PC-9 (cell line): ENCODE measurements at regions of chr6 and their contacts with region 1.

Region 1: DNA sequence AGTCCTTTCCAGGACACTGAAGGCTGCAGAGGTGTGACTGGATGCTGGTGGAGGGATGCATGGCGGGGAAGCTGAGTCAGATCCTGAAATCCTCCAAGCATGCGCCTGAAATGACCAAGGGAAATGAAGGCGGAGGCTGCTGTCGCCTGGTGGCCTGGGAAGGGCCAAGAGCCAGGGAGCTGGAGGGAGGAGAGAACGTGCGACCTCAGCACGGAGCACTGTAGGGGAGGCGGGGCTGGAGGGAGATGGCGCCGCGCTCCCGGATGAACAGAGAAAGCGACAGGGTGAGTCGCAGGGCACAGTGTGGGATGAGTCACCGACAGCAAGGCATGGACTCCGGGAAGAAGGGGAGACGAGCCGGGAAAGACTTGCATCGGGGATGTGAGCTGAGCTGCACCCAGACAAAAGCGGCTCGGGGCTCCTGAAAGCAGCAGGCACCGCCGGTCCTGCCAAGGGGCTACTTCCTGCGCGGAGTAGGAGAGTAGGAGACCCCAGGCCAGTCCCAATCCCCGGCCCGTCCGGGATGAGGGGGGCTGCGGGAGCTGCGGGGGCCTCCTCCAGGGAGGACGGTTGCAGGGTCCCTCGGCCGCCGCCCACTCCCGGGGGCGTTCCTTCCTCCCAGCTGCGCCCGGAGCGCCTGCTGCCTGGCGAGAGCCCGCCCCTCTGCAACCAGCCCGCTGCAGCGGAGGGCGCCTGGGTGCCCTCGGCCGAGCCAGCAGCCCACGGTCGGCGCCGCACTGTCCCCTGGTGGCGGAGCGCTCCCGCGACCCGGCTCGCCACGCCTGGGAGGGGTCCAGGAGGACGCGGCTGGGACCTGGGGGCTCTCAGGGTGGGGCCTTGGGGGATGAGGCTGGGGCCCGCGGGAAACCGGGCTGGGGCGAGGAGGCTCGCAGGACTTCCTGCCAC is 11.0 kb upstream of the NQO2 start:
- DNase-seq: peak; percentile 87 to 91
- H3K4me3 ChIP-seq: peak overlapping the region; percentile 83
- H3K27ac ChIP-seq: peak overlapping the region; percentile 99
- H3K4me1 ChIP-seq: peaks cover 49% of the 10 kb centered on the region
- H3K27me3 ChIP-seq: no peaks in the 10 kb centered on the region
- CTCF ChIP-seq: peak; percentile 74

Region 2: GRCh38 chr6:2738373-2738979 is 250.2 kb before region 1 on chr6:
- CTCF ChIA-PET with region 1: interaction called, 3 read pairs
- POLR2A ChIA-PET with region 1: no interaction called
- intact Hi-C with region 1: loop called (anchors 2 kb)
- DNase-seq: peak; percentile 38 to 53
- H3K4me3 ChIP-seq: no peak overlapping the region
- H3K27ac ChIP-seq: no peak overlapping the region
- H3K4me1 ChIP-seq: no peaks in the 10 kb centered on the region
- H3K27me3 ChIP-seq: no peaks in the 10 kb centered on the region
- CTCF ChIP-seq: peak; percentile 72

Region 3: DNA sequence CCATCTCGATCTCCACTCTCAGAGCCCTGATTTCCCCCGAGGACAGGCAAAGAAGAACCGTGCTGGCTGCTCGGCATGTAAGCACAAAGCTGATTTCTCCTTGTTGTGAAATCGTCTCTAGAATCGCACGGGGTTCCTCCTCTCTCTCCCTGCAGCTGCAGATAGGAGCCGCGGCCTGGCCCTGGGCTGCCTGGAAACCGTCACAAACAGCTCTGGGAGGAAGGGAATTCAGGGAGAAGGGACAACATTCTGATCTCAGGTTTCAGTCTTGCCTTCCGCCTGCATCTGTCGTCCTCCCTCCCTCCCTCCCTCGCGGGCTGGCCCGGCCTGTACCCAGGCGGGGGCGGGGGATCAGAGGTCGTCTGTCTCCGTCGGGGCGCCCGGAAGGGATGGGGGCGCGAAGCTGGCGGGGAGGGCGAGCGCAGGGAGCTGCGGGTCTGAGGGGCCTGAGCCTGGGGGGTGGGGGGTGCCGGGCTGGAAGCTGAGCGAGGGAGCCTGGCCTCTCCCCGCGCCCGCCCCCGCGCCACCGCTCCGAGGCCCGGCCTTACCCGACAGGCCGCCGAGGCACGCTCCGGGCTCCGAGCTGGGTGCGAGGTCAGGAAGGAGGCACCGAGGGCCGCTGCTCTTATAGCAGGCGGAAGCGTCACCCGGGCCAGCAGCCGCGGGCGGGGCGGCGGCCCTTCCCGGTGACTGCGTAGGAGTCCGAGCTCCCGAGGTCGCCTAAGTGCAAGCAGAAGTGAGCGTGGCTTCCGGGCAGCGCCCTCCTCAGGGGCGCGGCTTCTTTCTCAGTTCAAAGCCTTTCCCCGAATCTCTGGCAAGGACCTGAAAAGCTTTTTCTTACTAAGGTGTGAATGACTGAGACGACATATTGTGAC is 147.2 kb before region 1 on chr6 and contains the start of gene SERPINB1:
- CTCF ChIA-PET with region 1: interaction called, 10 read pairs
- POLR2A ChIA-PET with region 1: interaction called, 18 read pairs
- intact Hi-C with region 1: loop called (anchors 1 kb)
- DNase-seq: peak; percentile 87 to 94
- H3K4me3 ChIP-seq: peak within 1 kb of the TSS; percentile 64
- H3K27ac ChIP-seq: peak within 1 kb of the TSS; percentile 97
- H3K4me1 ChIP-seq: peaks cover 55% of the 10 kb centered on the region
- H3K27me3 ChIP-seq: no peaks in the 10 kb centered on the region
- CTCF ChIP-seq: no peak
- total RNA-seq, gene SERPINB1: 82.3 and 93.9 TPM in 2 replicates

Region 4: DNA sequence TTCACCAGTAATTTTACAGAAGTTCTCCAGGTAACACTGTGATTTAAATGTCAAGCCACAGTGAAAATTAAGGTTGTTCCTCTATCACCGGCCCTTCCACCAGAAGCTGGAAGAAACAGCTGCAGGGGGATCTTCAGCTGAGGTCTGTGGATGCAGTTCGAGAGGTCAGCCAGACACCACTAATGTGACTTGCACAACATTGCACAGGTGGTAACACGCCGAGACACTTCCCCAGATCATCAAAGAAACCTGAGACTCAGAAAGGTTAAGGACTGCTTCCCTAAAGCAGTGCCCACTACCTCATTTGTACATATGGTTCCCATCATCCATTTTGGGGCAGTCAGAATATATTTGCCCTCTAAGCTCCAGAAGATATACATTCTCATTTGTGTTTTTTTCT is 77.5 kb before region 1 on chr6:
- CTCF ChIA-PET with region 1: no interaction called
- POLR2A ChIA-PET with region 1: no interaction called
- intact Hi-C with region 1: loop called (anchors 5 kb)
- DNase-seq: no peak
- H3K4me3 ChIP-seq: no peak overlapping the region
- H3K27ac ChIP-seq: no peak overlapping the region
- H3K4me1 ChIP-seq: no peaks in the 10 kb centered on the region
- H3K27me3 ChIP-seq: no peaks in the 10 kb centered on the region
- CTCF ChIP-seq: no peak

Region 5: GRCh38 chr6:2940010-2940850 is 48.4 kb before region 1 on chr6:
- CTCF ChIA-PET with region 1: no interaction called
- POLR2A ChIA-PET with region 1: interaction called, 5 read pairs
- intact Hi-C with region 1: loop called (anchors 2 kb)
- DNase-seq: no peak
- H3K4me3 ChIP-seq: no peak overlapping the region
- H3K27ac ChIP-seq: no peak overlapping the region
- H3K4me1 ChIP-seq: no peaks in the 10 kb centered on the region
- H3K27me3 ChIP-seq: no peaks in the 10 kb centered on the region
- CTCF ChIP-seq: no peak

Region 6: GRCh38 chr6:3075522-3076113 is 86.9 kb after region 1 on chr6:
- CTCF ChIA-PET with region 1: no interaction called
- POLR2A ChIA-PET with region 1: no interaction called
- intact Hi-C with region 1: no loop called
- DNase-seq: no peak
- H3K4me3 ChIP-seq: no peak overlapping the region
- H3K27ac ChIP-seq: no peak overlapping the region
- H3K4me1 ChIP-seq: no peaks in the 10 kb centered on the region
- H3K27me3 ChIP-seq: no peaks in the 10 kb centered on the region
- CTCF ChIP-seq: no peak

Region 7: DNA sequence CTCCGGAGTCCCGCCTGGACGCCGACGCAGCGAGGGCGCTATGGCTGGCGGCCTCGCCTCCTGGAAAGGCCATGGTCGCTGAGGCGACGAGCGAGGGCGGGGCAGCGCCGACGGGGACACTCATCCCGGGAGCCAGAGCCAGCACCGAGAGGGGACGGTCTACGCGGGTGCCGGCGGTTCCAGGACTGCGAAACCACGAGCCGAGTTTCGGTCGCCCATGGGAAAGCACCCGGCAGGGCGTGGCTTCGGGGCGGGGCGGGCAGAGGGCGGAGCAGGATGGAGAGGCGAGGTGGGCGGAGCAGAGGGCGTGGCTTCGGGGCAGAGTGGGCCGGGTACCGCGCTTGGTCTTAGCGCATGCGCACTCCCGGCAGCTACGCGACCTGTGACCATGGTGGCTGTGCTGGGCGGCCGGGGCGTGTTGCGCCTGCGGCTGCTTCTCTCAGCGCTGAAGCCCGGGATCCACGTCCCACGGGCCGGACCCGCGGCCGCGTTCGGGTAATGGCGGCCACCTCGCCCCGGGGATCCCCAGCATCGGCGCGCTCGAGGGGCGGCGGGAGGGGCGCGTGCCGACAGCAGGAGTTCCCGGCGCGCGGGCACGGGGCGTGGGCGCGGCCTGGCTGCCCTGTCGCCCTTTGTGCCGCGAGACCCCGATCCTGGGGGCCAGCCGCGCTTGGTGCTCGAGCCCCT is 129.8 kb after region 1 on chr6 and contains the start of gene BPHL:
- CTCF ChIA-PET with region 1: no interaction called
- POLR2A ChIA-PET with region 1: no interaction called
- intact Hi-C with region 1: loop called (anchors 2 kb)
- DNase-seq: peak; percentile 71 to 98
- H3K4me3 ChIP-seq: peak within 1 kb of the TSS; percentile 84
- H3K27ac ChIP-seq: peak within 1 kb of the TSS; percentile 97
- H3K4me1 ChIP-seq: peaks cover 22% of the 10 kb centered on the region
- H3K27me3 ChIP-seq: no peaks in the 10 kb centered on the region
- CTCF ChIP-seq: no peak
- total RNA-seq, gene BPHL: 23.7 and 24.5 TPM in 2 replicates